IMR-90 (cell line): ENCODE measurements at regions of chr6 and their contacts with region 1.

Region 1: GRCh38 chr6:75208298-75209183 is 2.7 kb upstream of the COL12A1 start:
- DNase-seq: peak; percentile 77
- ATAC-seq: peak; percentile 39
- H3K4me3 ChIP-seq: no peak overlapping the region
- H3K27ac ChIP-seq: peak overlapping the region; percentile 50; the same call in 1 of the 2 replicates
- H3K4me1 ChIP-seq: peaks cover 15% of the 10 kb centered on the region
- H3K27me3 ChIP-seq: no peaks in the 10 kb centered on the region
- CTCF ChIP-seq: peak; percentile 95
- POLR2A ChIP-seq: peak; percentile 46; the same call in 1 of the 2 replicates
- RAD21 ChIP-seq: peak; percentile 96

Region 2: DNA sequence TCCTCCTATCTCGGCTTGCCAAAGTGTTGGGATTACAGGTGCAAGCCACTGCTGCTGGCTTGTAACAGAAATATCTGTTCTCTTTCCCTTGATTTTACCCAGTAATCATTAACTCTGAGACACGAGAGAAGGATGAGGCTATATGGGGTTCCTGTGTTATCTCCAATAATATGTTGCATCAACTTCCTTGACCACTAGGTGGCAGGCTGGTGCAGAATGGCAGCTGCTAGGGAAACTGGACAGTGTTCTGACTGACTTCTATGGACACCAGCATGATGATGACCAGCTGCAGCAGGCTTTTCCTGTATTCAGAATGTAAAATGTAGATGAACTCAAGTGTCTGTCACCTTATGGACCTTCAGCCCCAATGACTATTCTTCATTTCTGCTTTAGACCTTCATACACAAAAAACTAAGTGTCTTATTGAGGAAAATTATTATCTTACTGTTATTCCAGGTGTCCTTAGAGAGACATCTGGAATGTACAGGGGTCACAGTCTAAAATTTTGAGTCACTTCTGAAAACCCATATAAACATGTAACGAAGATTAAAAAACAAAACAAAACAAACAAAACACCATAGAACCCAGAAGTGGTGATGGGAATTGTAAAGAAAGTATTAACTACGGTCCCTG is 1533.0 kb before region 1 on chr6:
- CTCF ChIA-PET with region 1: interaction called, 3 read pairs
- POLR2A ChIA-PET with region 1: no interaction called
- dilution Hi-C with region 1: no loop called
- in situ Hi-C with region 1: loop called (anchors 10 kb)
- intact Hi-C with region 1: loop called (anchors 1 kb)
- DNase-seq: peak; percentile 81
- ATAC-seq: peak; percentile 100
- H3K4me3 ChIP-seq: no peak overlapping the region
- H3K27ac ChIP-seq: no peak overlapping the region
- H3K4me1 ChIP-seq: no peaks in the 10 kb centered on the region
- H3K27me3 ChIP-seq: no peaks in the 10 kb centered on the region
- CTCF ChIP-seq: peak; percentile 93
- POLR2A ChIP-seq: no peak
- RAD21 ChIP-seq: peak; percentile 95

Region 3: GRCh38 chr6:73803562-73804241 is 1404.8 kb before region 1 on chr6:
- CTCF ChIA-PET with region 1: interaction called, 3 read pairs
- POLR2A ChIA-PET with region 1: no interaction called
- dilution Hi-C with region 1: no loop called
- in situ Hi-C with region 1: no loop called
- intact Hi-C with region 1: loop called (anchors 5 kb)
- DNase-seq: peak; percentile 97
- ATAC-seq: peak; percentile 75
- H3K4me3 ChIP-seq: no peak overlapping the region
- H3K27ac ChIP-seq: peak overlapping the region; percentile 58; the same call in 1 of the 2 replicates
- H3K4me1 ChIP-seq: peaks cover 15% of the 10 kb centered on the region
- H3K27me3 ChIP-seq: no peaks in the 10 kb centered on the region
- CTCF ChIP-seq: peak; percentile 57
- POLR2A ChIP-seq: no peak
- RAD21 ChIP-seq: peak; percentile 32

Region 4: DNA sequence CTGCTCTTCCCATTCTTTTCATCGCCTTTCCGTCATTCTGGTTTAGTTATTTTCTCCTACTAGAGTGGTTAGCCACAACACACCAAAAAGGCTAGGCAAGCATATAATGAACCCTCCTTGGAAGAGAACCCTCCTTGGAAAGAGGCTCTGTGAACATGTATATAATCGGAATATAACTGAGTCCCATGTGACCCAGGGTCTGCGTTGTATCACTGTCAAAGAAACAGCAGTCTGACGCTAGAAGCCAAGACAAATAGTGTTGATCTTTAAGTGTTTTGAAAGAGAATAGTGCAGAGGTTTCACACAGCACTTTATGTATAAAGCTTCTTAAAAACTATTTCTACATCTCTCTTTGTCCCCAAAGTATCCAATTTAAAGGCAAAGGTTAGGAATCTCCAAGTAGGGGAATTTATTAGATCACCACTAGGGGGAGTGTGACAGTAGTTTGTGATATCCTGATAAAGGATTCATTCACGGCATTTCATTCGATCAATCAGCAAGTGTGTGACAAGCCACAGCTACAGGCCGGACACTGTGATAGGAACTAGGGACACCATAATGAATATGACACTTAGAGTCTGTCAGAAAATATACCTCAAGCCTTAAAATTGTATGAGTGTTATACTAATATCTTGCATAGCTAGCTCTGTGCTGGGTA is 1117.3 kb before region 1 on chr6:
- CTCF ChIA-PET with region 1: interaction called, 9 read pairs
- POLR2A ChIA-PET with region 1: no interaction called
- dilution Hi-C with region 1: no loop called
- in situ Hi-C with region 1: loop called (anchors 5 kb)
- intact Hi-C with region 1: loop called (anchors 2 kb)
- DNase-seq: peak; percentile 58
- ATAC-seq: peak; percentile 76
- H3K4me3 ChIP-seq: no peak overlapping the region
- H3K27ac ChIP-seq: no peak overlapping the region; the same call in 1 of the 2 replicates
- H3K4me1 ChIP-seq: peaks cover 4% of the 10 kb centered on the region
- H3K27me3 ChIP-seq: no peaks in the 10 kb centered on the region
- CTCF ChIP-seq: peak; percentile 62
- POLR2A ChIP-seq: no peak
- RAD21 ChIP-seq: peak; percentile 62

Region 5: GRCh38 chr6:74409447-74409846 is 799.1 kb before region 1 on chr6:
- CTCF ChIA-PET with region 1: interaction called, 10 read pairs
- POLR2A ChIA-PET with region 1: no interaction called
- dilution Hi-C with region 1: no loop called
- in situ Hi-C with region 1: loop called (anchors 10 kb)
- intact Hi-C with region 1: loop called (anchors 1 kb)
- DNase-seq: peak; percentile 87
- ATAC-seq: peak; percentile 99
- H3K4me3 ChIP-seq: no peak overlapping the region
- H3K27ac ChIP-seq: no peak overlapping the region
- H3K4me1 ChIP-seq: peaks cover 2% of the 10 kb centered on the region
- H3K27me3 ChIP-seq: no peaks in the 10 kb centered on the region
- CTCF ChIP-seq: peak; percentile 84
- POLR2A ChIP-seq: no peak
- RAD21 ChIP-seq: peak; percentile 97

Region 6: DNA sequence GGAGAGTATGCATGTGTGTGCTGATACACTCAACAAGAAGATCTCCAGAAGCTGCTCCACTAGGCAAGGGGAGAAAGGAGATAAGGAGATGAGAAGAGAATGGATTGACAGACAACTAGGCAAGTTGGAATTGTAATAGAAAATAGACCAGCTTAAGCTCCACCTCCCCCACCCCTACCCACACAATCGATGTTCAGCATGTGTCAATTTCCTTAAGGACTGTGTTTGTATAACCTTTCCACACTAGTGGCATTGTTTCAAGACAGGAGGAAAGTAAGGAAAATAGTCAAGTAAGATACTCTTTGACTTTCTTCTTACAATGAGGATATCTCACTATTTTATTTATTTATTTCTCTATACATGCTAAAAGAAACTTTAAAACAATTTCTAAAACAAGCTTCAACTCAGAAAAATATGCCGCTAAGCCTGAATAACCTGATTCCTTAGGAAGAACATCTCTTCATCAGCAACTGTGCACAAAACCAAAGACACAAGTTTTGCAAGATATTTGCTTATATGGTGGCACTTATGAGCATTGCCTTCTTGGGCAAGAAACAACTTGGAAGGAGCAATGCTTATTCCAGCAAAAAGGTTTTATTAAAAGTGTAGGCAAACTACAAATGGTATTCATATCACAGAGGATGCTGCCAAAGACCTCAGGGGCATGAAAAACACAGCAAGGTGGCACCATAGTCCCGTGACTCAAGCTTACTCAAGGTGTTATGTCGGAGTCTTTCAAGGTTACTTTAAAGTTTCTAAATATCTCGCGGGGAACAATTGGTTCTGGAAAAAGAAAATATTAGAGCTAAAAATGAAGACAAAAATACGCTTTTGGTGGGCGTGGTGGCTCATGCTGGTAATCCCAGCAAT is 251.7 kb before region 1 on chr6:
- CTCF ChIA-PET with region 1: no interaction called
- POLR2A ChIA-PET with region 1: no interaction called
- dilution Hi-C with region 1: no loop called
- in situ Hi-C with region 1: no loop called
- intact Hi-C with region 1: no loop called
- DNase-seq: no peak
- ATAC-seq: no peak
- H3K4me3 ChIP-seq: no peak overlapping the region
- H3K27ac ChIP-seq: no peak overlapping the region
- H3K4me1 ChIP-seq: no peaks in the 10 kb centered on the region
- H3K27me3 ChIP-seq: no peaks in the 10 kb centered on the region
- CTCF ChIP-seq: no peak
- POLR2A ChIP-seq: no peak
- RAD21 ChIP-seq: no peak

Region 7: DNA sequence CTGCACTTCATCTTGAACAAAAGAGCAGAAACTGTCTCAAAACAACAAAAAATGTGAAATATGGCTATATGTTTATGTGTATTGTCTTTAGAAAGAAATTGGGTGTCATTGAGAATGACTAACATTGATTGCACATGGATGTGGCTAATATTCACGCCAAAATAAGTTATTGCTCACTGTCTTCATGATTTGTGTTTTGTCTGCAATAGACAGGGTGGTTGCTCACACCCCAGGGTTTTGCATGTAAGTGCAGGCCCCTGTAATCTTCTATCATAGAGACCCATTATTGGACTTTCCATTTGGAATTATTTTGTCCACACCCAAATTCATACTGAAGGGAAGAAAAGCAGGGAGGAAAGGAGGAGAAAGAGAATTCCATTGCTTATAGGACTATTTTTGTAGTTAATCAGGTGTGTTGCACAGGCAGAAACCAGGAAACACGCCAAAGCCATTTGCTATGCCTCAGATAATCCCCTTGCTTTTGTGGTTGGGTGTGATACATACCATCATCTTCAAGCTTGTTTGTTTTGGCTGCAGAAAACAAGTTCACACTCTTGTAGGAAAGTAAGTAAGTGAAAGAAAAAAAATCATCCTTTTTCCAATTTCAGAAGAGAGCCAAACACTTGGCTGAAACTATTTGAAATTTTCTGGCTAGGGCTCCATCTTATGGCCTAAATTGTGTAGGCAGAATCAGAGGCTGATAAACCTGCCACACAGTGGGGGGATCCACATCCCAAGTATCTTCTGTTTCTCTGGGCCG is 216.8 kb before region 1 on chr6:
- CTCF ChIA-PET with region 1: no interaction called
- POLR2A ChIA-PET with region 1: no interaction called
- dilution Hi-C with region 1: no loop called
- in situ Hi-C with region 1: no loop called
- intact Hi-C with region 1: loop called (anchors 5 kb)
- DNase-seq: peak; percentile 38
- ATAC-seq: peak; percentile 64
- H3K4me3 ChIP-seq: no peak overlapping the region
- H3K27ac ChIP-seq: no peak overlapping the region
- H3K4me1 ChIP-seq: no peaks in the 10 kb centered on the region
- H3K27me3 ChIP-seq: no peaks in the 10 kb centered on the region
- CTCF ChIP-seq: peak; percentile 54
- POLR2A ChIP-seq: no peak
- RAD21 ChIP-seq: peak; percentile 44